GM13977 (cell line): ENCODE measurements at regions of chr10 and their contacts with region 1.

Region 1: DNA sequence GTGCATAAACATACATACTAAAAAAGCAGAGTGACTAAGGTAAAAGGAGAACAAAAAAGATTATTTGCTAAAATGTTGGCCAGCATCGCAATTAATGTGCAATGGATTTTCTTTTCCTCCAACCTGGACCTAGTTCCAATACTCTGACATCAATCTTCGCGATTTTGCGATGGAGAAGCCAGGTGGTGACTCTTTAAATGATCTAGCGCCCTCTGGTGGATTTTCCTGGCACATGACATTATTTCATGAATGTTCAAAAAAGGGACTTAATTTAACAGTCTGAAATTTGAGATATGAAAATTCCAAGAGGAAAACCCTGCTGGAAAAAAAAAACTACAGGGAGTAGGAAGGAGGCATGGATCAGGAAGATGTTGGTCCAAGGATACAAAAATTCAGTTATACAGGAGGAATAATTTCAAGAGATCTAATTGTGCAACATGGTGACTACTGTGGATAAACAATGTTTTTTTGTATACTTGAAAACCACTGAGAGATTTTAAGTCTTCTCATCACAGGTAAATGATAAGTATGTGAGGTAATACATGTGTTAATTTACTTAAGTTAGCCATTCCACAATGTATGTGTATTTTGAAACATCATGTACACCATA is 4.3 kb upstream of the KCNMA1 start:
- DNase-seq: peak; percentile 74
- CTCF ChIP-seq: peak; percentile 77

Region 2: DNA sequence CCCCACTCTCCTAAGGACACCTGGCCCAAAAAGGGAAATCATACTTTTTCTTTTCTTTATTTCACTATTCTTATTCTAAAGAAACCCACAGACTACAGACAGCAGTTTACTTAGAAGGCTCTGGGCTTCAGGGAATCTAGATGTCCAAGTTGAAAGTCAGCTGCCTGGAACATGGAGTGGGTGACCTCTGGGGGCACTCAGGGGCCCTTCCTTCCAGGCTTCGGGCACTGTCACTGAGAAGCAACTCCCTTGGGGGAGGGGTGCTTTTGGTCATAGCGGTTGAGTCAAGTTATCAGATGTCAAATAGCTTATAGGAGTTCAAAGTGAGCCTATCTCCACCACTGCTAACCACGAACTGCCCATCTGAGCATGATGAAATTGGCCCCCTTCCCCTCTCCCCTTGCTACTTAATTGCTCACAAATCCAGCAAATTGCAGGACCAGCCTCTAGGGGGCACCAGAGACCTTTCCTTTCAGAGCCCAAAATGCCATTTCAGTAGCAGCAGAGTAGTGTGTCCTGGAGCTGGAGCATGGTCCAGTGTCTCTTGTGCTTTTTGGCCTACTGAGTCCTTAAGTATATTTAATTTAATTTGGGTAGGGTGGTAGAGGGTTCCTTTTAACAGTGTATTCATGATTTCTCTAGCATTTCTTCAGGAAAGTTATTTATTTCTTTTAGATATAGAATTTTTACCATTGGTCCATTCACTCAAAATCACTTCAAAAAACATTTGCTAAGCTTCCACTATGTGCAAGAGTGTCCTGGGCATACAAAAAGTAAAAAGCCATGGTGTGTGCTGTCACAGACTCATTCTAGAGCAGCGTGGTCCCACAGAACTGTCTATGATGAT is 468.1 kb before region 1 on chr10:
- in situ Hi-C with region 1: loop called (anchors 5 kb)
- DNase-seq: peak; percentile 44
- CTCF ChIP-seq: peak; percentile 91

Region 3: GRCh38 chr10:77405771-77406241 is 236.1 kb before region 1 on chr10:
- in situ Hi-C with region 1: loop called (anchors 25 kb)
- DNase-seq: peak; percentile 45
- CTCF ChIP-seq: no peak

Region 4: GRCh38 chr10:77564731-77565589 is 76.9 kb before region 1 on chr10:
- in situ Hi-C with region 1: no loop called
- DNase-seq: no peak
- CTCF ChIP-seq: no peak